IMR-90 (cell line): ENCODE measurements at regions of chr1 and their contacts with region 1.

Region 1: GRCh38 chr1:221203224-221204054 is 324.2 kb downstream of the HLX start:
- DNase-seq: peak; percentile 74
- ATAC-seq: peak; percentile 78
- H3K4me3 ChIP-seq: no peak overlapping the region
- H3K27ac ChIP-seq: no peak overlapping the region
- H3K4me1 ChIP-seq: no peaks in the 10 kb centered on the region
- H3K27me3 ChIP-seq: no peaks in the 10 kb centered on the region
- CTCF ChIP-seq: peak; percentile 89
- POLR2A ChIP-seq: no peak
- RAD21 ChIP-seq: peak; percentile 90

Region 2: GRCh38 chr1:220873868-220874655 is 329.4 kb before region 1 on chr1:
- CTCF ChIA-PET with region 1: interaction called, 7 read pairs
- POLR2A ChIA-PET with region 1: interaction called, 5 read pairs
- dilution Hi-C with region 1: no loop called
- in situ Hi-C with region 1: loop called (anchors 10 kb)
- intact Hi-C with region 1: loop called (anchors 1 kb)
- DNase-seq: peak; percentile 66
- ATAC-seq: peak; percentile 43
- H3K4me3 ChIP-seq: no peak overlapping the region
- H3K27ac ChIP-seq: no peak overlapping the region
- H3K4me1 ChIP-seq: no peaks in the 10 kb centered on the region
- H3K27me3 ChIP-seq: no peaks in the 10 kb centered on the region
- CTCF ChIP-seq: peak; percentile 76
- POLR2A ChIP-seq: no peak
- RAD21 ChIP-seq: peak; percentile 82

Region 3: DNA sequence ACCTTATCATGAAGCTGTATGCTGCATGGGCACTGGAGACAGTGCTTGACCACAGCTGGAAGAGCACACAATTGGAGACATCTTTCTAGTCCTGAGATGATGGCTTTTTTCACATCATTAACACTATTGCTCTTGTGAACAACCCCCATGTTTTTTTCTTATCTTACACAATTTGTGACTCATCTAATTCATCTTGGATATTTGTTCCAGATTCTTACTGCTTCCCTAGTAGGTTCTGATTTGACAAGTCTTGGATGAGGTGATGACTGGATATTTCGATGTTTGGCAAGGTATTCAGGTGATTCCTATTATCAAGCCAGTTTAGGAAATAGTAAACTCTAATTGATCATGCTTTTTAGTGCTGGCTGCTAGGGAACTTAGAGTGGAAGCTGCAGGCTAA is 300.5 kb before region 1 on chr1:
- CTCF ChIA-PET with region 1: interaction called, 8 read pairs
- POLR2A ChIA-PET with region 1: no interaction called
- dilution Hi-C with region 1: no loop called
- in situ Hi-C with region 1: loop called (anchors 5 kb)
- intact Hi-C with region 1: loop called (anchors 1 kb)
- DNase-seq: peak; percentile 25
- ATAC-seq: no peak
- H3K4me3 ChIP-seq: no peak overlapping the region
- H3K27ac ChIP-seq: no peak overlapping the region
- H3K4me1 ChIP-seq: 0 out of 2 replicates have a peak, but pooled peaks cover 2% of the 10 kb centered on the region
- H3K27me3 ChIP-seq: 0 out of 2 replicates have a peak, but pooled peaks cover 2% of the 10 kb centered on the region
- CTCF ChIP-seq: no peak
- POLR2A ChIP-seq: no peak
- RAD21 ChIP-seq: no peak

Region 4: GRCh38 chr1:220990427-220991339 is 212.8 kb before region 1 on chr1:
- CTCF ChIA-PET with region 1: no interaction called
- POLR2A ChIA-PET with region 1: no interaction called
- dilution Hi-C with region 1: no loop called
- in situ Hi-C with region 1: no loop called
- intact Hi-C with region 1: loop called (anchors 5 kb)
- DNase-seq: peak; percentile 83
- ATAC-seq: peak; percentile 88
- H3K4me3 ChIP-seq: no peak overlapping the region
- H3K27ac ChIP-seq: no peak overlapping the region
- H3K4me1 ChIP-seq: peaks cover 2% of the 10 kb centered on the region
- H3K27me3 ChIP-seq: no peaks in the 10 kb centered on the region
- CTCF ChIP-seq: peak; percentile 38
- POLR2A ChIP-seq: no peak
- RAD21 ChIP-seq: peak; percentile 43

Region 5: GRCh38 chr1:221125976-221126375 is 77.5 kb before region 1 on chr1:
- CTCF ChIA-PET with region 1: no interaction called
- POLR2A ChIA-PET with region 1: no interaction called
- dilution Hi-C with region 1: no loop called
- in situ Hi-C with region 1: no loop called
- intact Hi-C with region 1: no loop called
- DNase-seq: no peak
- ATAC-seq: no peak
- H3K4me3 ChIP-seq: no peak overlapping the region
- H3K27ac ChIP-seq: no peak overlapping the region
- H3K4me1 ChIP-seq: no peaks in the 10 kb centered on the region
- H3K27me3 ChIP-seq: no peaks in the 10 kb centered on the region
- CTCF ChIP-seq: no peak
- POLR2A ChIP-seq: no peak
- RAD21 ChIP-seq: no peak

Region 6: GRCh38 chr1:221397606-221398005 is 194.2 kb after region 1 on chr1:
- CTCF ChIA-PET with region 1: no interaction called
- POLR2A ChIA-PET with region 1: no interaction called
- dilution Hi-C with region 1: no loop called
- in situ Hi-C with region 1: no loop called
- intact Hi-C with region 1: no loop called
- DNase-seq: no peak
- ATAC-seq: no peak
- H3K4me3 ChIP-seq: no peak overlapping the region
- H3K27ac ChIP-seq: no peak overlapping the region
- H3K4me1 ChIP-seq: peaks cover 5% of the 10 kb centered on the region
- H3K27me3 ChIP-seq: no peaks in the 10 kb centered on the region
- CTCF ChIP-seq: no peak
- POLR2A ChIP-seq: no peak
- RAD21 ChIP-seq: no peak